B cell (primary cell): ENCODE measurements at regions of chr4 and their contacts with region 1.

Region 1: DNA sequence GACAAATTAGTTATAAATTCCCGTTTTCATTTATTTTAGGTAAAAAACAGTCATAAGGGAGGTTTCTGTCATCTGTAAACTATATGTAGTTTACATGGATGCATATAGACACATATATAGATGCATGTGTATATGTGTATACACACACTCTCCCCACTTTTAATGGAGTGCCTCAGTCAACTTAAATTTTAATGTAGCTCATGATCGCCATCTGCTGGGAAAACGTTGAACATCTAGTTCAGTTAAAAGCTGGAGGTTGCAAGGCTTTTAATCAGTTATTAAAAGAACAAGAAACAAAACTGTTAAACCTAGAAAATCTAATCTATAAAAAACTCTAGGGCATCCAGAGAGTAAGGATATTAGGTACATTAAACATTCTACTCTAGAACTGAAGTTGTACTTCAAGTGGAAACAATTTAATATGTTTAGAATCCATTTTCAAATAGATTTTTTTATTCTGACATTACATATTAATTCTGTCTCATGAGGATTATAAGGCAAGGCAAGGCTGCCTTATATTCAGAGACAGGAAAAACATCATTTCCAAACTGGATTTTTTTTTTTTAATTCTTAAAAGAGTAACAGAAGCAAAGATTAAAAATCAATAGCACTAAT is 122.6 kb downstream of the SHISA3 start:
- DNase-seq: peak; percentile 59
- ATAC-seq: peak; percentile 47
- H3K4me3 ChIP-seq: no peak overlapping the region
- H3K4me3 Mint-ChIP-seq: no peak overlapping the region
- H3K27ac ChIP-seq: no peak overlapping the region
- H3K27ac Mint-ChIP-seq: no peak overlapping the region
- H3K4me1 ChIP-seq: no peaks in the 10 kb centered on the region
- H3K4me1 Mint-ChIP-seq: peaks cover 3% of the 10 kb centered on the region
- H3K27me3 ChIP-seq: no peaks in the 10 kb centered on the region
- H3K27me3 Mint-ChIP-seq: no peaks in the 10 kb centered on the region
- CTCF ChIP-seq: peak; percentile 90

Region 2: GRCh38 chr4:41957634-41958033 is 562.3 kb before region 1 on chr4:
- CTCF ChIA-PET with region 1: interaction called, 22 read pairs
- POLR2A ChIA-PET with region 1: no interaction called
- intact Hi-C with region 1: loop called (anchors 5 kb)
- DNase-seq: peak; percentile 48
- ATAC-seq: peak; percentile 24
- H3K4me3 ChIP-seq: no peak overlapping the region
- H3K4me3 Mint-ChIP-seq: no peak overlapping the region
- H3K27ac ChIP-seq: no peak overlapping the region
- H3K27ac Mint-ChIP-seq: no peak overlapping the region
- H3K4me1 ChIP-seq: no peaks in the 10 kb centered on the region
- H3K4me1 Mint-ChIP-seq: no peaks in the 10 kb centered on the region
- H3K27me3 ChIP-seq: no peaks in the 10 kb centered on the region
- H3K27me3 Mint-ChIP-seq: no peaks in the 10 kb centered on the region
- CTCF ChIP-seq: peak; percentile 67

Region 3: DNA sequence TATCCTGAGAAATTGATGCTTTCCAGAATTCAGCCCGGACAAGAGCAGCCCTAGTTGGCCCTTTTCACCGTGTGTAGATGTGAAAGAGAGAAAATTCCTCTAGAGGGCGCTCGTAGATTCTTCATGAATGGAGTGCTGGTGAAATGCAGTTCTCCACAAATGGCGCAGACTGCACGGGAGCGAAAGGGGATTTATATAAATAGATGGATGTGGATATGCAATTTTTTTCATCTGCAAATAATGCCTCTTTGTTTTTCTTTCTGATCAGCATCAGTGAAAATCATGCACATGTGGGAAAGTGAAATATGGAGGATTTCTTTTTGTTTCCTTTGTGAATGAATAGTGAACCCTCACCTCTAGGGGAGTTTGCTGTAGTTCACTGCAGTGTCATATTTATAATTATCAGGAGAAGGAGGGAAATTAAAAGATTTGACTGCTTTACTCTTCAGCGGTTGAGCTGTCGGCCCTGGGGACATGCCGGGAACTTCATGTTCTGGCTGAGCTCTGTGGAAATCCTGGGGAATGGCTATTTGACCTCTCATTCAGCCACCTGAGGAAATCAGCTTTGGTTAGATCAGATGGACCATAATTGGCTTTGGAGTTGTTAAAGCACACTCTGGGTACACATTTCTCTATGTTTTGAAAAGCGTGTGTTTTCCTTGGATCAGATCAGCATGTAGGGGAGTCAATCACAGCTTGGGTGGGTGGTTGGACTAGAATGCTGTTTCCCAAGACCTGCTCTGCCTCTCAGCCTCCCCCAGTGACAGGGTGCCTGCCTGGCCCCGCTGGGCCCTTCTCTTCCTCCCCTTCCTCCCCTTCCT is 237.6 kb before region 1 on chr4:
- CTCF ChIA-PET with region 1: interaction called, 15 read pairs
- POLR2A ChIA-PET with region 1: no interaction called
- intact Hi-C with region 1: loop called (anchors 1 kb)
- DNase-seq: peak; percentile 59
- ATAC-seq: peak; percentile 45
- H3K4me3 ChIP-seq: no peak overlapping the region
- H3K4me3 Mint-ChIP-seq: peak overlapping the region; percentile 27
- H3K27ac ChIP-seq: no peak overlapping the region
- H3K27ac Mint-ChIP-seq: no peak overlapping the region
- H3K4me1 ChIP-seq: peaks cover 8 to 9% of the 10 kb centered on the region in 2 donors
- H3K4me1 Mint-ChIP-seq: peaks cover 14% of the 10 kb centered on the region
- H3K27me3 ChIP-seq: peaks cover 0 to 7% (median 4%) of the 10 kb centered on the region in 4 experiments
- H3K27me3 Mint-ChIP-seq: peaks cover 18% of the 10 kb centered on the region
- CTCF ChIP-seq: peak; percentile 77

Region 4: GRCh38 chr4:42371306-42372252 is 148.3 kb before region 1 on chr4:
- CTCF ChIA-PET with region 1: interaction called, 43 read pairs
- POLR2A ChIA-PET with region 1: no interaction called
- intact Hi-C with region 1: no loop called
- DNase-seq: peak; percentile 31
- ATAC-seq: no peak
- H3K4me3 ChIP-seq: no peak overlapping the region
- H3K4me3 Mint-ChIP-seq: no peak overlapping the region
- H3K27ac ChIP-seq: no peak overlapping the region
- H3K27ac Mint-ChIP-seq: no peak overlapping the region
- H3K4me1 ChIP-seq: no peaks in the 10 kb centered on the region
- H3K4me1 Mint-ChIP-seq: no peaks in the 10 kb centered on the region
- H3K27me3 ChIP-seq: peaks cover 0 to 5% (median 0%) of the 10 kb centered on the region in 4 experiments
- H3K27me3 Mint-ChIP-seq: peaks cover 15% of the 10 kb centered on the region
- CTCF ChIP-seq: peak; percentile 56

Region 5: GRCh38 chr4:42442601-42443000 is 77.3 kb before region 1 on chr4:
- CTCF ChIA-PET with region 1: no interaction called
- POLR2A ChIA-PET with region 1: no interaction called
- intact Hi-C with region 1: no loop called
- DNase-seq: no peak
- ATAC-seq: no peak
- H3K4me3 ChIP-seq: no peak overlapping the region
- H3K4me3 Mint-ChIP-seq: no peak overlapping the region
- H3K27ac ChIP-seq: no peak overlapping the region
- H3K27ac Mint-ChIP-seq: no peak overlapping the region
- H3K4me1 ChIP-seq: no peaks in the 10 kb centered on the region
- H3K4me1 Mint-ChIP-seq: no peaks in the 10 kb centered on the region
- H3K27me3 ChIP-seq: no peaks in the 10 kb centered on the region
- H3K27me3 Mint-ChIP-seq: no peaks in the 10 kb centered on the region
- CTCF ChIP-seq: no peak